Aorta (tissue), 5 donors: ENCODE measurements at regions of chr10 and their contacts with region 1.

Region 1: GRCh38 chr10:125093199-125093973 is 67.0 kb downstream of the CTBP2 start:
- DNase-seq: peak; percentile 60 to 85
- ATAC-seq: peak; percentile 60
- H3K4me3 ChIP-seq: no peak overlapping the region
- H3K27ac ChIP-seq: peak overlapping the region; percentile 33 to 58
- H3K4me1 ChIP-seq: peaks cover 0 to 4% of the 10 kb centered on the region in 2 donors
- H3K27me3 ChIP-seq: no peaks in the 10 kb centered on the region

Region 2: DNA sequence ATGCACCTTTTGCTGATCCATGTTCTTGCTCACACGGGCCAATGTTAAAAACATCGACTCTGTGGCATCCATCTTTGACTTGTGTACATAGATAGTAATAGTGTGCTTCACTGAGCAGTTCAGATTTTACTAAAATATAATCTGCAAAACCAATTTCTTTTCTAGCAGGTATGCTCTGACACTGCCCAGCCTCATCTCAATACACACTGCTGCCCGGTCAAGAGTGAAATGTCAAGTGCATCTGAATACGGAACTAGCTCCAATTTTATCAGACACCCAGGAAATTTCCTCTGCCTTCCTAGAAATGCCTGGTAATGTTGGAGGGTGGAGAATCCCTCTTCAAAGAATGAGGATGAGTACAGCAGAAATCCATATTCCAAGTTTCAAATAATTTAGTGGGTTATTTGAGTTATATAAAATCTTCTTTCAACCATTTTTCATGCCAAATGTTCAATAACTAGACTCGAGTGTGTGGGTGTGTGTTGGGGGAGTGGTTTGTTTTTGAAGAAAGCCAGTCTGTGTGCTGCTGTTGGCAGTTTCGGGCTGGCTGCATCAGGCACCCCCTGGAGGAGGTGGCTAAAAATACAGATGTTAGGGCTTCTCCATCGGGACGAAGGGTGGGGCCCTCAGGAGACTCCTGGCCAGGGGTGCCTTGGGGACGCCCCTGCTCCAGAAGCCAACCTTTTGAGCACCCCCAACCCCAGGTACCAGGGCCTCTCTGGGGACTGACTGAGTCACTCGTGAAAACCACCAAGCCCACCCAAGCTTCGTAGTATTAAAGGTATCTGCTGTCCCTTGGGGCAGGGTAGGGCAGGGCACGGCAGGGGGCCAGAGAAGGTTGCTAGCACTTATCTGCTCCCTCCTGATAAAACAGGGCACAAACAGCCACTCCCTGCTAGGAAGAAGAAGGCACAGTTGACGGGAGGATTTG is 51.6 kb after region 1 on chr10:
- intact Hi-C with region 1: loop called (anchors 5 kb)
- DNase-seq: peak in 1 of 2 donors; percentile 77
- ATAC-seq: no peak
- H3K4me3 ChIP-seq: no peak overlapping the region
- H3K27ac ChIP-seq: no peak overlapping the region
- H3K4me1 ChIP-seq: no peaks in the 10 kb centered on the region
- H3K27me3 ChIP-seq: no peaks in the 10 kb centered on the region